ENCODE measurements at regions of chr22 and their contacts with region 1.

Region 1: GRCh38 chr22:28034760-28035401 is 115.8 kb upstream of the PITPNB start:
- ATAC-seq: peak; percentile 66 to 92 (median 73)
- H3K4me3 ChIP-seq: no peak overlapping the region
- H3K27ac ChIP-seq: peak overlapping the region; percentile 36 to 46
- H3K4me1 ChIP-seq: peaks cover 61 to 63% of the 10 kb centered on the region in 2 donors

Region 2: DNA sequence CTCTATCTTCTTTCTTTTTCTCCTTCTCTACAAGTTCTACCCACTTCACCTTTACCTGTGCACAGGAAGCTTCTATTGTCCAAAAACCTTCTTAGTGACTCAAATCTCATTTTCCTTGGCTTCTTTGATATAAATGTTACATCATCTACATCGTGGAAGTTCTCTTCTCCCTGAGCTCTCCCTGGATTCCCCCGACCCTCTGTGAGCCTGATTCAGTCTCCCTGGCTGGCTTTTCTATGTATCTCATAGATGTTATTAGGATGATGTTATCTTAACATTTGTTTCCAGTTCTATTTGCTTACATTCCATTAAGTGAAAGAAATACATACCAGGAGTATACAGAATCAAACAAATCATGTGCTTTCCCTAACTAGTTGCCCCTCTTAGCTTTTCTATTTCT is 120.0 kb after region 1 on chr22:
- in situ Hi-C with region 1: no loop called
- ATAC-seq: no peak
- H3K4me3 ChIP-seq: no peak overlapping the region
- H3K27ac ChIP-seq: no peak overlapping the region
- H3K4me1 ChIP-seq: peaks cover 0 to 17% of the 10 kb centered on the region in 2 donors

Region 3: GRCh38 chr22:28800308-28801077 is 765.6 kb after region 1 on chr22 and contains the start of gene XBP1:
- in situ Hi-C with region 1: loop called in 1 of 9 experiments (anchors 25 kb)
- ATAC-seq: peak; percentile 88 to 95 (median 92)
- H3K4me3 ChIP-seq: peak within 1 kb of the TSS; percentile 78 to 98 (median 87)
- H3K27ac ChIP-seq: peak within 1 kb of the TSS; percentile 96 to 99
- H3K4me1 ChIP-seq: peaks cover 17 to 24% of the 10 kb centered on the region in 2 donors
- total RNA-seq, gene XBP1: 48.5 to 253 (median 99.5) TPM

Measured in motor neuron (in vitro differentiated cells).